ENCODE measurements at regions of chr12 and their contacts with region 1.

Region 1: DNA sequence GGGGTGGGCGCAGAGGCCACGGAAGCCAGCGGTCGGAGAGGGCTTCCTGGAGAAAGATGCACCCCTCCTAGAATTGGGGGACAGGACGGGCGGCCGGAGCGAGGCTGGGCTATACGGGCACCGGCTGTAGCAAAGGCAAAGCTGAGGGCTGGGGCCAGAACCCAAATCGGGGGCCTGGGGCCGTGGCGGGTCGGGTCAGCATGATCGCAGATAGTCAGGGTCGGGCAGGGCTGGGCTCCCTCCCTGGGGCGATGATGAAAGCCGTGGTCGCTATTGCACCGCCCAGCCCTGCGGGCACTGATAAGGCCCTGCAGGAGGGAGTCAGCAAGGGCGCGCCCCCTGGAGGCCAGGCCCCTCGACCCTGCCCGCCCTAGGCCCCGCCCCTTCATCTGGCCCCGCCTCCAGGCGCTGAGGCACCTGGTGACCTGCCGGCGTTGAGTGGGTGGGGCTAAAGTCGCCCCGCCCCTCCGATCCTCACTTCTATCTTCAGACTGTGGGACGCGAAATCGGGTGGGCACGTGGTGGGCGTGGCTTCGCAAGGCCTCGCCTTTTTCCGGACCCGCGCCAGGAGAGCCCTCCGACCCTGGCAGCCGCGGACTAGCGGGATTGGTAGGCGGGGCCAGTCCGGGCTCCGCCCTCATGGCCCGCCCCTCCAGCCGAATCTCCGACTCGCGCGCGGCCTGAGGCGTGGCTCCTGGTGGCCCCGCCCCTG is 418 bp upstream of the SH2B3 start:
- DNase-seq: peak; percentile 98
- H3K4me3 Mint-ChIP-seq: peak overlapping the region; percentile 81
- H3K27ac Mint-ChIP-seq: peak overlapping the region; percentile 72
- H3K4me1 Mint-ChIP-seq: peaks cover 62% of the 10 kb centered on the region
- H3K27me3 Mint-ChIP-seq: peaks cover 29% of the 10 kb centered on the region

Region 2: DNA sequence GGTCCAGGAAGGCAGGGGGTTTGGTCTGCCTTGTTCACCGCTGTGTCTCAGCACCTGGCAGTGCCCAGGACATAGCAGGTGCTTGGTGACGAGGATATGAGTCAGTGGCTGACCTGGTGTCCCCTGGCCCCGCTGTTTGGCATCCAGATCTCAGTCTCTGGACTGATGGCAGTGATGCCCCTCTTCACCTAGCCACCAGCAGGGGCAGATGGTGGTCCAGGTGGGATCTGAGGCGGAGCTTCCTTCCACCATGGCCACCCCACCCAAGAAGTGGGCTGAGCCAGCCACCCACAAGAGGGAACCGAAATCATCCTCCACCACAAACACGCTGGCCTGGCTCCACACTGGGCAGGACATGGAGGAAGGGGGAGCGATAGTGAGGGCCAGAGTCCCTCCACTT is 15.7 kb before region 1 on chr12:
- CTCF ChIA-PET with region 1: no interaction called
- POLR2A ChIA-PET with region 1: no interaction called
- DNase-seq: no peak
- H3K4me3 Mint-ChIP-seq: no peak overlapping the region
- H3K27ac Mint-ChIP-seq: no peak overlapping the region
- H3K4me1 Mint-ChIP-seq: no peaks in the 10 kb centered on the region
- H3K27me3 Mint-ChIP-seq: peaks cover 19% of the 10 kb centered on the region

Region 3: DNA sequence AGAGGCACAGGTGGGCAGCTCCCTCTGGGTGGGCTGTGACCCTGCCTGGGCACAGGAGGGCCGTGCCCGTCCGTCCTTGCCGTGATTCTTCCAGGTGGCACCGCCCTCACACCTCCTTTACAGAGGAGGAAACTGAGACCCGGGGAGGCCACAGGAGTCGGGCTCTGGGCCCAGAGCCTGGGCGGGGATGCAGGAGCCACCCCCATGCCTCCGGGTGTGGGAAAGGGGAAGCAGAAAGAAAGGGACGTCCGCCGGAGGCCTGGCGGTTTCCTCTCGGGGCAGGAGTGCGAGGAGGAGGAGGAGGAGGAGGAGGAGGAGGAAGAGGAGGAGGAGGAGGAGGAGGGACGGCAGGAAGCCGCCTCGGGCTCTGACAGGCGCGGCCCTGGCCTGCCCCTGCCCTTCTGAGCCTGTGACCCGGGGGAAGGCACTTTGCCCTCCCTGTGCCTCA is 23.4 kb after region 1 on chr12:
- CTCF ChIA-PET with region 1: interaction called, 28 read pairs
- POLR2A ChIA-PET with region 1: interaction called, 237 read pairs
- DNase-seq: peak; percentile 41
- H3K4me3 Mint-ChIP-seq: peak overlapping the region; percentile 46
- H3K27ac Mint-ChIP-seq: peak overlapping the region; percentile 89
- H3K4me1 Mint-ChIP-seq: peaks cover 92% of the 10 kb centered on the region
- H3K27me3 Mint-ChIP-seq: no peaks in the 10 kb centered on the region

Region 4: DNA sequence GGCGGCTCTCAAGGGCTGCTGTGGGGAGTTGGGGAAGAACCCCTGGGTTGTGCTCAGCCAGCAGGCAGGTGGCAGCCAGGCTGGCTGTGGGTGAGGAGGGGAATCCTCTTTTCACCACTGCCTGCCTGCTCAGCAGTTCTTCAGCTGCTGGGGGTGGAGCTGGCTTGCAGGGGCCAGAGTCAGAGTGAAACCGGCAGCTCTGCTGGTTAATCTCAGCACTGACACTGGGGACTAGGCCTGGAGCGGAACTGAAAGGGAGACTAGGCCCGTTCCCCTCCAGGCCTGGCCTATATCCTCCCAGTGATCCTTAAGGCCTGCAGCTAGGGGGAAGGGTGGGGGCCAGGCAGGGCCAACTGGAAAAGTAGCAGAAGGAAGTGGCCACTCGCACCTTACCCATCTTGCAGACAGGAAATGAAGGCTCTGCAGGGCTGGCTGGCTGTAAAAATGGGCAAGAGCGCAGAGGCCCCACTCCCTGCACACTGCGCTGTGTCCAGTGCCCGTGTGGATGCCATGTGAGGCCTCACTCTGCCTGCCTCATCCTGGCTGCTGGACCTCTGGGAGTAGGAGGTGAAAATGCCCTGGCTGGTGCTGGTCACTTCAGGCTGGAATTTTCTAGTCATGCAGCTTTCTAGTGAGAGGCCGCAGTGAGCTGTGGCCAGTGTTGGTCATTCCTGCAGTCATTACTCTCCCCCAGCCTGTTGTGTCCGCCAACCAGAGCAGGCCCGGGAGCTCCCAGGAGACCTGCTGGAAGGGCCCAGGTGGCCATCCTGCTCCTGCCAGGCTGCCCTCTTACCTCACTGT is 39.8 kb after region 1 on chr12:
- CTCF ChIA-PET with region 1: interaction called, 527 read pairs
- POLR2A ChIA-PET with region 1: interaction called, 257 read pairs
- DNase-seq: peak; percentile 93
- H3K4me3 Mint-ChIP-seq: peak overlapping the region; percentile 48
- H3K27ac Mint-ChIP-seq: peak overlapping the region; percentile 84
- H3K4me1 Mint-ChIP-seq: peaks cover 72% of the 10 kb centered on the region
- H3K27me3 Mint-ChIP-seq: peaks cover 1% of the 10 kb centered on the region